MCF 10A (cell line): ENCODE measurements at regions of chr9 and their contacts with region 1.

Region 1: DNA sequence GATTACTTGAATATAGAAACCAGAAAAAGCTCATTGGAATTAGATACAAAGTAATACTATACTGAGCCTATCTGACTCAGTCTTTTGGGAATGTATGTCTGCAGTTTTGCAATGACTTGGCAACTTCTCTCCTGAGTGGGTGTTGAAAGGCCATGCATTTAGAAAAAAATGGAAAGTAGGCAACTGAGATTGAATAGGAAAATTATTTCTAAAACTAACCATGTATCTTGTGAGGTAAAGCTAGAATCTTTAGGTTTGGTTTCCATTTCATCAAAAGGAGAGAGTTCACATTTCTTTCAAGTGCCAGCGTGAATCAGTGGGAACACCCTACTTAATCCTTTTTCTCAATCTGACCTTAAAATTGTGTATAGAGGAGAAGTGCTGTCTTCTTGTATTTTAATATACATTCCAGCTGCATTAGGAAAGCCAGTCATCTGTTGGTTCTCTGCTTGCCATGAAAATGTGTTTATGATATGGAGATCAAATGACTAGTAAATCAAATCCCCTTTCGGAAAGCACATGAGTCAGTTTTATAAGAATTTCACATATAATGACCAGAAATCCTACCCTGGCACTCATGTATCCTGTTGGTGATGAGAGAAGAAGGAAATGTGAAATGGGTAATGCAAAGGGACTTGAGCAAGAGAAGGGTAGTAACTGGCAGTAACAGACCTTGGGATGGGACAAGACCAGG is 30.4 kb downstream of the NFX1 start:
- DNase-seq: peak; percentile 92
- H3K4me3 Mint-ChIP-seq: peak overlapping the region; percentile 20
- H3K27ac Mint-ChIP-seq: peak overlapping the region; percentile 70
- H3K4me1 Mint-ChIP-seq: peaks cover 18% of the 10 kb centered on the region
- H3K27me3 Mint-ChIP-seq: no peaks in the 10 kb centered on the region
- CTCF ChIP-seq: no peak

Region 2: DNA sequence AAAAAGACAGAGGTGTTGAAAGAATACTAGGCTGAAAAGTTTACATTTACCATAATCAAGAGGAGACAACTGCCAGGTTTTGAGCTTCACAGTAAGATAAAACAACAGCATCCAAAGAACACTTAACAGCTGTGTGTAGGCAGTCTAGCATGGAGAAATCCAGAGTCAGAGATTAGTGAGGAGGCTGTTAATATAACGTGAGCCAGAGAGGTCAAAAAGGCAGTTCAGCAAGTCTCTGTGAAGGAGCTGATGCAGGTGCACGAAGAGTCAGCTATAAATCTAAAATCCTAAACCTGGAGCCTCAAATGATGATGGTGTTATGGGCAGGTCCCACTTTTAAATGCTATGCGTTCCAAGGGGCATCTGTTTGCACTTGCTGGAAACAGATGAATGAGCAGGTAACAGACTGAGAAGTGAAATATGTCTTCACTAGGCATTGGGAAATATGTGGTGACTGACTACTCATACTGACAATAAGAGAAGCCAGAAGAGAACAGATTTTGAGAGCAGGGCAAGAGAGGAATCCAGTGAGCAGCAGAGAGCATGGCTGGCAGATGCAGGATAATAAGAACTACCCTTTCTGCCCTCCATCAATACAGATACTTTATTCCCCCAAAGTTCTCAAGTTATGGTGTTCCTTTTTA is 328.0 kb before region 1 on chr9:
- CTCF ChIA-PET with region 1: no interaction called
- POLR2A ChIA-PET with region 1: no interaction called
- intact Hi-C with region 1: no loop called
- DNase-seq: no peak
- H3K4me3 Mint-ChIP-seq: no peak overlapping the region
- H3K27ac Mint-ChIP-seq: no peak overlapping the region
- H3K4me1 Mint-ChIP-seq: peaks cover 9% of the 10 kb centered on the region
- H3K27me3 Mint-ChIP-seq: no peaks in the 10 kb centered on the region
- CTCF ChIP-seq: no peak

Region 3: DNA sequence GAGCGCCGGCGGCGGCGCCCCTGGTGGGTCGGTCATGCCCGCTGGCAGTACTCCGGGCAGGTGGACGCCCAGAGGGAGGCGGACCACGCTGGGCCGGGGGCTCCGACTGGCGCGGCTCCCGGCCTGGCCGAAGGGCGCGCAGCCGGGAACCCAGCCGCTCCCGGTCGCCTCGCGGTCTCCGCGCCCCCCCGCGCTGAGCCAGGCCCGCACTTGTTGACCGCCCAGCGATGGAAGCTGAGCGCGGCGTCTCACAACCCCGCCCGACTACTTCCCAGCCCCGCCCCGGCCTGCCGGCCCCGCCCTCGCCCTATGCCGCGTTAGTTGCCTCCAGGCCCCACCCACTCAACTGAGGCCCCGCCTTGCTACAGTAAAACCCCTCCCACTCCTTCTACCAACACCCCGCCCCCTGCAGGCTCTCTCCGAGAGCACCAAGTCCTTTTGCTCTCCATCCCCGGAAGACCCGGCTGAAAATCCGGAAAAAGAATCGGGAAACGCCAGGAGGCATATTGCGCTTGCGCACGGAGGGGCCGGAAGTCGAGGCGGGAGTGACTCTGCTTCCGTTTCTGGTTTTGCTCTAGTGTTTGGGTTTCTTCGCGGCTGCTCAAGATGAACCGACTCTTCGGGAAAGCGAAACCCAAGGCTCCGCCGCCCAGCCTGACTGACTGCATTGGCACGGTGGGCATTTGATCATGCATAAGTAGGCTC is 56.1 kb before region 1 on chr9 and contains the starts of genes BAG1 and CHMP5:
- CTCF ChIA-PET with region 1: no interaction called
- POLR2A ChIA-PET with region 1: interaction called, 7 read pairs
- intact Hi-C with region 1: loop called (anchors 2 kb)
- DNase-seq: peak; percentile 99
- H3K4me3 Mint-ChIP-seq: peak within 1 kb of the TSS; percentile 99
- H3K27ac Mint-ChIP-seq: peak within 1 kb of the TSS; percentile 95
- H3K4me1 Mint-ChIP-seq: peaks cover 33% of the 10 kb centered on the region
- H3K27me3 Mint-ChIP-seq: no peaks in the 10 kb centered on the region
- CTCF ChIP-seq: no peak
- total RNA-seq, gene BAG1: 75.7 and 91.8 TPM in 2 replicates
- total RNA-seq, gene CHMP5: 67.6 and 85.1 TPM in 2 replicates

Region 4: GRCh38 chr9:33297432-33297831 is 23.3 kb before region 1 on chr9:
- CTCF ChIA-PET with region 1: interaction called, 5 read pairs
- POLR2A ChIA-PET with region 1: interaction called, 12 read pairs
- intact Hi-C with region 1: no loop called
- DNase-seq: peak; percentile 5
- H3K4me3 Mint-ChIP-seq: peak overlapping the region; percentile 19
- H3K27ac Mint-ChIP-seq: peak overlapping the region; percentile 59
- H3K4me1 Mint-ChIP-seq: peaks cover 49% of the 10 kb centered on the region
- H3K27me3 Mint-ChIP-seq: no peaks in the 10 kb centered on the region
- CTCF ChIP-seq: no peak